Adrenal gland (tissue), 19 donors: ENCODE measurements at regions of chr12 and their contacts with region 1.

Region 1: DNA sequence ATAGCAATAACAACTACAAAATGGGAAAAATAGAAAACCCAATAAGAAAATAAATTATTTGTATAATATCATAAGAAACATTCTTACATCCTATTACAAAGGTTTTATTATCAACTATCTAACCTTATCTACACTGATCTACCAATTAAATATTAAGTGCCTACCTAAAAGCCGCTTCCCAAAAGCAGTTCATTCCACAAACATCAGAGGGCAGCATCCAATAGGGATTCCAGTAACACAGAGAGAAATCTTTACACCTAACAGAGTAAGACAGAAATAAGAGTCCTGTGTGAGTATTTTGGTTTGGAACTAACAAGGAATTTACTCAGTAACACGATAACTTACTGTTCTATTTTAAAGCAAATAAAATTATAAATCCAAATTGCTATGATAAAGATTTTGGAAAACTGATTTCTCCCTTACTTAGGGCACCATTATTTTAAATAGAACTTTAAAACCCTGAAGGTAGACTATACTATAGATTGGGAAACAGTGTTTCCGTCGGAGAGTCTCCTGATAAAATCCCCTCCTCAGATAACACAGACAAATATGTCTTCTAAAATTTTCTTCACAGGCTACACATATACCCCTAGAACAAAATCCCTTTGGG is 15.0 kb downstream of the GXYLT1 start:
- DNase-seq: peak; percentile 25 to 76 (median 54)
- H3K4me3 ChIP-seq: no peak overlapping the region
- H3K27ac ChIP-seq: no peak overlapping the region
- H3K4me1 ChIP-seq: peaks cover 8 to 18% of the 10 kb centered on the region in 2 donors
- H3K27me3 ChIP-seq: no peaks in the 10 kb centered on the region
- CTCF ChIP-seq: peak; percentile 77 to 96 (median 87)
- POLR2A ChIP-seq: no peak

Region 2: DNA sequence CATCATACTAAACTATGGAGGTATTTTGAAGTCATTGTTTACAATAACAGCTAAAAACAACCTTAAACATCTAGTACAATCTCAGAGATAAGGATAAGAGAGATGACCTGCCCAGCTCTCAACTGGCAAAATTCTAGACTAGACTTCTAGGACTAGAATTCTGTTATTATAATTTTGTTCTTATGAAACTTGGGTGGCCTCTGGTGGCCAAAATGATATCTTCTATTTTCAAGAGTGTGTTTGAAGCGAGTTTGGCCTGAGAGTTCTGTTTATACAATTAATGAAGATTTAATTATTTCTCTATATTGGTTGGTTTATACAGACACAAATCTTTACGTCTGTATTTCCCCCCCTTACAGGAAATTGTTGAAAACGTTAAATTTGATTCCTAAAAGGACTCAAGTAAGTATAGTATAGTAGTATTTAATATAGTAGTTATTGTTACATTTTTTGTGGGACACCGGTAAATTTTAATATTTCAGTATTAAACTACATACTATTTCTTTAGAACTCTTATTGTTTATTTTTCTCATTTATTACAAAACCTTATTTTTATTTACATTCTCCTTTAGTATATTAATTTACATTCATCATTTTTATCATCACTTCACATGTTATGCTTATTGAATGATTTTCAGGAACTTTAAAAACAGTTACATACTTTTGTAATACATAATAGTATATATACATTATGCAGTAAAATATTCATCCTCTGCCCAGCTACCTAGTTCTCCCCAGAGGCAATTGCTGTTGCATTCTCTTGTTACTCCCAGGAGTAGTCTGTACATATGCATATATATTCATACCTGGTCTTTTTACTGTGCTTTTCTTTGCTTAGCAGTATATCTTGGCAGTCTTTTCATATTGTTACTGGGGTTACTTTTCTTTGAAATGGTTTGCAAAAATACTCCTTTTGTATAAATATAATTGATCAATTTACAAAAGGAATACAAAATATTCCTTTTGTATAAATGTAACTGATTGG is 202.9 kb after region 1 on chr12:
- intact Hi-C with region 1: loop called (anchors 5 to 10 kb)
- DNase-seq: peak in 5 of 7 donors; percentile 28 to 63 (median 56)
- H3K4me3 ChIP-seq: no peak overlapping the region
- H3K27ac ChIP-seq: no peak overlapping the region
- H3K4me1 ChIP-seq: peaks cover 0 to 15% of the 10 kb centered on the region in 2 donors
- H3K27me3 ChIP-seq: no peaks in the 10 kb centered on the region
- CTCF ChIP-seq: peak; percentile 53 to 79 (median 68)
- POLR2A ChIP-seq: no peak